PC-9 (cell line): ENCODE measurements at regions of chr4 and their contacts with region 1.

Region 1: GRCh38 chr4:138035781-138036258 is 206.3 kb downstream of the SLC7A11 start:
- DNase-seq: peak in 1 of 2 experiments; percentile 29
- H3K4me3 ChIP-seq: no peak overlapping the region
- H3K27ac ChIP-seq: no peak overlapping the region
- H3K4me1 ChIP-seq: peaks cover 11% of the 10 kb centered on the region
- H3K27me3 ChIP-seq: no peaks in the 10 kb centered on the region
- CTCF ChIP-seq: peak; percentile 68

Region 2: DNA sequence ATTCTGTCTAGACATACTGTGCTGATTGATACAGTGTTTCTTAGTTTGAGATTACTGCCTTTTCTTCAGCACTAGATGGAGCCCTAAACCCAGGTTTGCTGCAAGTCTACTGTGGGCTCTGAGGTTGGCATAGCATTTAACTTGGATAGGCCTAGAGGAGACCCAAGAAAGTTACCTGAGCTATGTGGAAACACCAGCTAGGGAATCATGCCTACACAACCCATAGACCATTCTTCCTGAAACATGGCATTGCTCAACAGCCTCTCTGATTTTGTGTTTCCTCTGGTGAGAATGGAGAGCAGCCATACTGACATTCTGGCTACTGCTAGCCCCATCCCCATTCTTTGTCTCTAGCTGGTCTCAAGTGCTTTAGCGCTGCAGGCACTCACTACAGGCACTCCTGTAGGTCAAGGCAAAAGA is 215.8 kb before region 1 on chr4:
- CTCF ChIA-PET with region 1: no interaction called
- POLR2A ChIA-PET with region 1: no interaction called
- intact Hi-C with region 1: loop called (anchors 10 kb)
- DNase-seq: peak; percentile 12 to 37
- H3K4me3 ChIP-seq: no peak overlapping the region
- H3K27ac ChIP-seq: no peak overlapping the region
- H3K4me1 ChIP-seq: no peaks in the 10 kb centered on the region
- H3K27me3 ChIP-seq: no peaks in the 10 kb centered on the region
- CTCF ChIP-seq: peak; percentile 69

Region 3: GRCh38 chr4:138138774-138139173 is 103.0 kb after region 1 on chr4:
- CTCF ChIA-PET with region 1: no interaction called
- POLR2A ChIA-PET with region 1: no interaction called
- intact Hi-C with region 1: no loop called
- DNase-seq: no peak
- H3K4me3 ChIP-seq: no peak overlapping the region
- H3K27ac ChIP-seq: no peak overlapping the region
- H3K4me1 ChIP-seq: no peaks in the 10 kb centered on the region
- H3K27me3 ChIP-seq: no peaks in the 10 kb centered on the region
- CTCF ChIP-seq: no peak

Region 4: GRCh38 chr4:138162259-138162658 is 126.4 kb after region 1 on chr4:
- CTCF ChIA-PET with region 1: no interaction called
- POLR2A ChIA-PET with region 1: no interaction called
- intact Hi-C with region 1: loop called (anchors 5 kb)
- DNase-seq: no peak
- H3K4me3 ChIP-seq: no peak overlapping the region
- H3K27ac ChIP-seq: 0 out of 2 replicates have a peak overlapping the region, but pooled peaks have one; percentile 23
- H3K4me1 ChIP-seq: no peaks in the 10 kb centered on the region
- H3K27me3 ChIP-seq: no peaks in the 10 kb centered on the region
- CTCF ChIP-seq: no peak

Region 5: DNA sequence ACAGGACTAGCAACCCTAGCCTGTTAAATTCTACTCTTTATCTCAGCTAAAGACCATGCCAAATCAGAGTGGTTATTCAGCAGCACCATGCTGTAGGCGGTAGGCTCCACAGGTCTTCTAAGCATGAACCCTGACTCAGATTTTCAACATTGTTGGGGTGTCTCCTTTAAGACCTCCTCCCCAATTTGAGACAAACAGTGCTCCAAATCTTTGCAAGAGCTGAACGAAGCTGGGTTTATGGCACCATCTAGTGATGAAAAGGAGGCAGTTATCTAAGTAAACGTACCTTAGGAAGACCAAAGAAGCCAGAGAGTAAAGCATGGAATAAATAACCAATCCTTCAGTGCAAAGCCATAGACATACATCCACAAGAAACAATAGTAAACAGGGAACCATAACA is 540.9 kb after region 1 on chr4:
- CTCF ChIA-PET with region 1: no interaction called
- POLR2A ChIA-PET with region 1: no interaction called
- intact Hi-C with region 1: loop called (anchors 1 kb)
- DNase-seq: no peak
- H3K4me3 ChIP-seq: no peak overlapping the region
- H3K27ac ChIP-seq: no peak overlapping the region
- H3K4me1 ChIP-seq: no peaks in the 10 kb centered on the region
- H3K27me3 ChIP-seq: no peaks in the 10 kb centered on the region
- CTCF ChIP-seq: peak; percentile 66

Region 6: GRCh38 chr4:138870737-138871554 is 835.1 kb after region 1 on chr4:
- CTCF ChIA-PET with region 1: interaction called, 3 read pairs
- POLR2A ChIA-PET with region 1: no interaction called
- intact Hi-C with region 1: loop called (anchors 5 kb)
- DNase-seq: peak; percentile 62 to 65
- H3K4me3 ChIP-seq: no peak overlapping the region
- H3K27ac ChIP-seq: no peak overlapping the region
- H3K4me1 ChIP-seq: no peaks in the 10 kb centered on the region
- H3K27me3 ChIP-seq: no peaks in the 10 kb centered on the region
- CTCF ChIP-seq: peak; percentile 81